PC-3 (cell line): ENCODE measurements at regions of chr10 and their contacts with region 1.

Region 1: GRCh38 chr10:48551861-48552591 is 52.8 kb downstream of the ARHGAP22 start:
- DNase-seq: peak; percentile 81
- ATAC-seq: peak; percentile 74
- H3K4me3 ChIP-seq: no peak overlapping the region
- H3K27ac ChIP-seq: no peak overlapping the region
- H3K4me1 ChIP-seq: no peaks in the 10 kb centered on the region
- H3K27me3 ChIP-seq: no peaks in the 10 kb centered on the region
- CTCF ChIP-seq: peak; percentile 98

Region 2: DNA sequence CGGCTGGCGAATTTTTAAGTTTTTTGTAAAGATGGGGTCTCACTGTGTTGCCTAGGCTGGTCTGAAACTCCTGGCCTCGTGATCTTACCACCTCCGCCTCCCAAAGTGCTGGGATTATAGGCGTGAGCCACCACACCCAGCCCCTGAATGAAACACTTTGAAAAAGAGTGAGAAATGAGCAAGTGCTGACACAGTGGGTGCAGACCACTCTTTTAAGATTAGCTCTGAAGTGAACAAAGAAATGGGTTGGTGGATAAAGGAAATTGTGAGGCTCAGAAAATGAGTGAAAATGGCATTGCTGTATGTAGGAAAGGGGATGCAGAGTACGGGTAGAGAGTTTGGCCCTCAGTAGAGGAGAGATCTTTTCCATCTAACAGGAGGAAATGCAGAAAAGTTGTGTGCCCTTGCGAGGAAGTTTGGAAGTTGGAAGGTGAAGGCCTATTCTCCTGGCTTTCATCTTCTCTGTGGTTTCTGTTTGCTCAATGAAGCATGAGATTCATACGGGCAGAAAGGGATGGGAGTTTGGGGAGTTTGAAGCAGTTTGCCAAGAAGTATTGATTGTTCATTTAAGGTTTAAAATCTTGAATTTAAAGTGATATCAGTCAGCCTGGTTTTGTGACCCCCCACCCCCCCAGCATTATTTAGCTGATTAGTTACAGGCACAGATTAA is 234.6 kb before region 1 on chr10:
- CTCF ChIA-PET with region 1: no interaction called
- POLR2A ChIA-PET with region 1: no interaction called
- intact Hi-C with region 1: no loop called
- DNase-seq: no peak
- ATAC-seq: no peak
- H3K4me3 ChIP-seq: no peak overlapping the region
- H3K27ac ChIP-seq: no peak overlapping the region
- H3K4me1 ChIP-seq: no peaks in the 10 kb centered on the region
- H3K27me3 ChIP-seq: no peaks in the 10 kb centered on the region
- CTCF ChIP-seq: no peak

Region 3: GRCh38 chr10:48604991-48605508 is 53.0 kb after region 1 on chr10 and contains the start of gene ARHGAP22:
- CTCF ChIA-PET with region 1: interaction called, 10 read pairs
- POLR2A ChIA-PET with region 1: no interaction called
- intact Hi-C with region 1: loop called (anchors 1 kb)
- DNase-seq: peak; percentile 63
- ATAC-seq: peak; percentile 76
- H3K4me3 ChIP-seq: peak within 1 kb of the TSS; percentile 88
- H3K27ac ChIP-seq: peak within 1 kb of the TSS; percentile 67
- H3K4me1 ChIP-seq: peaks cover 60% of the 10 kb centered on the region
- H3K27me3 ChIP-seq: no peaks in the 10 kb centered on the region
- CTCF ChIP-seq: no peak
- total RNA-seq, gene ARHGAP22: 12.2 and 14.9 TPM in 2 replicates

Region 4: DNA sequence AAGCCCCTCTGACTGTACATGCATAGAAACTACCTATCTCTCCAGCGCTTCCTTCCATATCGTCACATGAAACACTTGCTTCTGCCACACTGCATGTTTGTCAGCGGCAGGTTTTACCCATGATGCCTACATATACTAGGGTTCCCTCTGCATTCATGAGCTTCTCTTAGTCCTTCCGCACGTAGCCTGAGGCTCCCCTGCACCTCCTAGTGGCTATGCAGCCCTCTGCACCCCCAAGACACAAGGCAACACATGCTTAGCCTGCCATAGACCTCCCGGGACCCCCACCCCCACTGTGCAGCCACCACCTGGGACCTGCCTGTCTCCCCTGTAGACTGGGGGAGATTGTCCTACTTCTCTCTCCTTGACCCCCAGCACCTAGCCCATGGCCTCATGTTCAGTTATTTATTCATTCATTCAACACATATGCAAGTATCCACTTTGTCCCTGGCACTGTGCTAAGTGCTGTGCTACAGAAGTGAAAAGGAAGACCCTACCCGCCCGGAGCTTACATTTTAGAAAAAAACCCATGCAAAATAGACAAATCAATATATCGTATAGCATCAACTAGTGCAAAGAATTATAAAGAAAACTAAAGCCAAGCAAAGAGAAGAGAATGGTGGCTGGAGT is 612.6 kb after region 1 on chr10:
- CTCF ChIA-PET with region 1: no interaction called
- POLR2A ChIA-PET with region 1: no interaction called
- intact Hi-C with region 1: loop called (anchors 2 kb)
- DNase-seq: peak; percentile 60
- ATAC-seq: peak; percentile 50; the same call in 1 of the 2 replicates
- H3K4me3 ChIP-seq: no peak overlapping the region
- H3K27ac ChIP-seq: no peak overlapping the region
- H3K4me1 ChIP-seq: peaks cover 12% of the 10 kb centered on the region; the same call in 1 of the 2 replicates
- H3K27me3 ChIP-seq: peaks cover 8% of the 10 kb centered on the region; the same call in 1 of the 2 replicates
- CTCF ChIP-seq: peak; percentile 89

Region 5: GRCh38 chr10:49518982-49519578 is 967.1 kb after region 1 on chr10:
- CTCF ChIA-PET with region 1: no interaction called
- POLR2A ChIA-PET with region 1: no interaction called
- intact Hi-C with region 1: loop called (anchors 10 kb)
- DNase-seq: peak; percentile 91
- ATAC-seq: peak; percentile 84
- H3K4me3 ChIP-seq: no peak overlapping the region
- H3K27ac ChIP-seq: no peak overlapping the region
- H3K4me1 ChIP-seq: no peaks in the 10 kb centered on the region
- H3K27me3 ChIP-seq: no peaks in the 10 kb centered on the region
- CTCF ChIP-seq: peak; percentile 99